Ovary (tissue), 10 donors: ENCODE measurements at regions of chr3 and their contacts with region 1.

Region 1: GRCh38 chr3:192423003-192423349 is 304.4 kb downstream of the FGF12 start:
- DNase-seq: no peak
- H3K4me3 ChIP-seq: no peak overlapping the region
- H3K27ac ChIP-seq: no peak overlapping the region
- H3K4me1 ChIP-seq: no peaks in the 10 kb centered on the region
- H3K27me3 ChIP-seq: no peaks in the 10 kb centered on the region
- CTCF ChIP-seq: no peak
- EP300 ChIP-seq: no peak
- POLR2A ChIP-seq: no peak

Region 2: DNA sequence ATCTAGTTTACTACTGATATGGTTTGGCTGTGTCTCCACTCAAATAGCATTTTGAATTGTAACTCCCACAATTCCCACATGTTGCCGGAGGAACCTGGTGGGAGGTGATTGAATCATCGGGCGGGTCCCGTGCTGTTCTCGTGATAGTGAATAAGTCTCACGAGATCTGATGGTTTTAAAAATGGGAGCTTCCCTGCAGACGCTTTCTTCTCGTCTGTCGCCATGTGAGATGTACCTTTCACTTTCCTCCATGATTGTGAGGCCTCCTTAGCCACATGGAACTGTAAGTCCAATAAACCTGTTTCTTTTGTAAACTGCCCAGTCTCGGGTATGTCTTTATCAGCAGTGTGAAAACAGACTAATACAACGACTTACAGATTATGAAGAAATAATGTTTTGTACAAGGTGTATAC is 997.6 kb before region 1 on chr3:
- intact Hi-C with region 1: loop called in 1 of 4 experiments (anchors 10 kb)
- DNase-seq: no peak
- H3K4me3 ChIP-seq: no peak overlapping the region
- H3K27ac ChIP-seq: no peak overlapping the region
- H3K4me1 ChIP-seq: no peaks in the 10 kb centered on the region
- H3K27me3 ChIP-seq: no peaks in the 10 kb centered on the region
- CTCF ChIP-seq: no peak
- EP300 ChIP-seq: no peak
- POLR2A ChIP-seq: no peak